ENCODE measurements at regions of chr12 and their contacts with region 1.

Region 1: DNA sequence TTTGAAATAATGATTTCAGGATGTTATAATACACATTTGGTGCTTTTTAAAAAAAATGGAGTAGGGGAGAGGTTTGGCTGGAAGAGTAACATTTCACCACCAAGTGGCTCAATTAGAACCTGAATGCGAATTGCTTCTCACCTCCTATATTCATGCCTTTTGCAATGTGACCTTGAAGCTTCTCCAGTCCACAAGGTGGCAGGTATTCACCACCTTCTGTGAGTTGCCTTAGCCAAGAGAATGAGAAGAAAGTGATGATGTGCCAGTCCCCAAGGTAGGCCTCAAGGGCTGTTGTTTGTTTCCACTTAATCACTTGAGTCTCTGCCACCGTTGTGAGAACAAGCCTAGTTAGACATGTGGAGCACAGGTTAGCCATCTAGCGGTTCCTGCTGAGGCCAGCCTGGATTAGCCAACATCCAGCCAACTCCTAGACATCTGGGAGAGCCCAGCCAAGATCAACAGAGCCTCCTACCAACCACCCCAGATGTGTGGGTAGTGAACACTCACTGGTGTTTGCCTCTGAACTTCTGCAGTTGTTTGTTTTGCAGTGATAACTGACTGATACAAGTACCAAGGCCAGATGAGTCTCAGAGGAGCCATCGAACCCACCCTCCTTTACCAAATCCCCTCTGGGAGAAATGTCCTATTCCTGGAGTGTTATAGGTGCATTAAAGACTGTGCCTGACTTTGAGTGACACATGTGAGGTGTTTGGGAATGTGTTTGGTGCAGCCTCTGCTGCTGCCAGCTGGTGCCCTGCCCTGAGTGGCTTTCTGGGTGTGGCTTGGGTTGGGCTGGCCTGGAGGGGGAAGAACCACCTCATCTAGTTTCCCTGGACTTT is 132.5 kb upstream of the RFLNA start:
- DNase-seq: no peak
- H3K4me3 ChIP-seq: no peak overlapping the region
- H3K27ac ChIP-seq: no peak overlapping the region
- H3K4me1 ChIP-seq: no peaks in the 10 kb centered on the region
- H3K27me3 ChIP-seq: peaks cover 63% of the 10 kb centered on the region
- CTCF ChIP-seq: peak; percentile 38; the same call in 1 of the 2 replicates

Region 2: DNA sequence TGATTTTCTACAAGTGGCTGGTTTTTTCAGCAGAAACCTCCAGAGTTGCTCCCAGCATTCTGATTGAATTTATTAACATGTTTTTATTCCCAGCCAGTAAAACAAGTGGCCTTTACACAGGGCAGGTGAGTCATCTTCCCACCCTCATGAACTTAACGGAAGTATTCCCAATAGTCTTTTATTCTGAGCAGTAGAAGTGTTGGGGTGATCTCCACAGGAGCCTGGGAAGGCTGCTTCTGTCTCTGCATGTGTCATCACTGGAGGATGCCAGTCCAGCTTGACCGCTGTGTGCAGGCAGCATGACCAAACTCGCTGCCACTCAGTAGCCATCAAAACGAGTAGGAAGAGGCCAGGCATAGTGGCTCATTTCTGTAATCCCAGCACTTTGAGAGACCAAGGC is 413.7 kb before region 1 on chr12:
- CTCF ChIA-PET with region 1: no interaction called
- POLR2A ChIA-PET with region 1: no interaction called
- intact Hi-C with region 1: no loop called
- DNase-seq: no peak
- H3K4me3 ChIP-seq: no peak overlapping the region
- H3K27ac ChIP-seq: no peak overlapping the region
- H3K4me1 ChIP-seq: no peaks in the 10 kb centered on the region
- H3K27me3 ChIP-seq: no peaks in the 10 kb centered on the region
- CTCF ChIP-seq: no peak

Region 3: DNA sequence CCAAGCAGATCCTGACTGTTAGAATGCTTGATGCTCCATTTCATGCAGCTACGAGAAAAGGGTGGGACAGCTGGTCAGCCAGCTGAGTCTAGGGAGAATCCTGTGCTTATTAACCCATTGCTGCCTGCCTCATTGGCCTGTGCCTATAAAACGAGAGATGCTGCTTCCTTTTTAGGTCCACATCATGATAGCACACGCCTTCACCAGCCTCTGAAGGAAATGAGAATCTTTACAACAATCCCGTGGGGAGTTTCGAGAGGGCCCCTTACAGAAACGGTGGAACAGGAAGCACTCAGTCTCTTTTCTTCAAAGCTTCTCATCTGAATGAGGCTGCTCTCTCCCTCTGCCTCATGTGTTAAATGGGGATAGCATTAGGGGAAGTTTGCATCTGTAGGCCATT is 14.8 kb before region 1 on chr12:
- CTCF ChIA-PET with region 1: no interaction called
- POLR2A ChIA-PET with region 1: no interaction called
- intact Hi-C with region 1: no loop called
- DNase-seq: no peak
- H3K4me3 ChIP-seq: no peak overlapping the region
- H3K27ac ChIP-seq: no peak overlapping the region
- H3K4me1 ChIP-seq: no peaks in the 10 kb centered on the region
- H3K27me3 ChIP-seq: peaks cover 74% of the 10 kb centered on the region
- CTCF ChIP-seq: no peak

Region 4: DNA sequence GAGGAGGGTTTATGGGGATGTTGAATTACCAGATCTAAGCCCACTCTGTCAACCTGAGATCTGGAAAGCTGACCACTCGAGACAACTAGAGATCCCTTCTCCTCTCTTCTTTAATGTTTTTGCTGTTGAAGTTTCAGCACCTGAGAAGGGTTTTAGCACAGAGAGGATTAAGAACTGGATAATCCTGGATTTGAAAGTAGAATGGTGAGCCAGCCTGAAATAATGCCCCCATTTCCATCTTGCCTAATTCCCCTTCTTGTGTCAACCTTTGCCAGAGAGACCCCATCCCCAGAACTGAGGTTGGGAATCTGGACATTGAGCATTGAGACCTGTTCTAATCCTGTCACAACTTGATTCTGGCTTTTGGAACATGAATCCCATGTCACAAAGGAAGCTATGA is 44.7 kb after region 1 on chr12:
- CTCF ChIA-PET with region 1: interaction called, 10 read pairs
- POLR2A ChIA-PET with region 1: no interaction called
- intact Hi-C with region 1: no loop called
- DNase-seq: no peak
- H3K4me3 ChIP-seq: no peak overlapping the region
- H3K27ac ChIP-seq: no peak overlapping the region
- H3K4me1 ChIP-seq: no peaks in the 10 kb centered on the region
- H3K27me3 ChIP-seq: peaks cover 65% of the 10 kb centered on the region
- CTCF ChIP-seq: no peak

Measured in PC-9 (cell line).